PC-9 (cell line): ENCODE measurements at regions of chr20 and their contacts with region 1.

Region 1: DNA sequence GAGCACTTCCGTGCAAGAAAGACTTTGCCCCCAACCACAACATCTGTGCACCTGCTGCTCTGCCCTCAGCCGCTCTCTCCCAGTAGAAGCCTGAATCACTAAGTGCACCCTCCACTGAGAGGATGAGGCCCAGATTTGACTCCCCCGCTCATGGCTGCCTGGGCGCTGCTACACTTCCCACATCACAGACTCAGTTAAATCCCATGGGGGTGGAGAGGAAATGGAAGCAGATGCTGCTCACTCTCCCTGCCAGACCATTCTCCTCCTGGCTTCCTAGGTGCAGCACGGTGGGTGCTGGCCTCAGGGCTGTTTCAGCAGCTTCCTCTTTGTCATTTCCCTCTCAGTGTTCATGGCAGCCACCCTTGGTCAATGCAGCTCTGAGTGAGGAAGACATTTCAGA is 4.8 kb downstream of the CST5 start:
- DNase-seq: no peak
- H3K4me3 ChIP-seq: no peak overlapping the region
- H3K27ac ChIP-seq: no peak overlapping the region
- H3K4me1 ChIP-seq: peaks cover 29% of the 10 kb centered on the region
- H3K27me3 ChIP-seq: no peaks in the 10 kb centered on the region
- CTCF ChIP-seq: no peak

Region 2: GRCh38 chr20:23622839-23623343 is 251.9 kb before region 1 on chr20:
- CTCF ChIA-PET with region 1: no interaction called
- POLR2A ChIA-PET with region 1: interaction called, 10 read pairs
- intact Hi-C with region 1: no loop called
- DNase-seq: peak; percentile 74 to 81
- H3K4me3 ChIP-seq: peak overlapping the region; percentile 42; the same call in 1 of the 2 replicates
- H3K27ac ChIP-seq: peak overlapping the region; percentile 90
- H3K4me1 ChIP-seq: peaks cover 23% of the 10 kb centered on the region
- H3K27me3 ChIP-seq: no peaks in the 10 kb centered on the region
- CTCF ChIP-seq: no peak

Region 3: DNA sequence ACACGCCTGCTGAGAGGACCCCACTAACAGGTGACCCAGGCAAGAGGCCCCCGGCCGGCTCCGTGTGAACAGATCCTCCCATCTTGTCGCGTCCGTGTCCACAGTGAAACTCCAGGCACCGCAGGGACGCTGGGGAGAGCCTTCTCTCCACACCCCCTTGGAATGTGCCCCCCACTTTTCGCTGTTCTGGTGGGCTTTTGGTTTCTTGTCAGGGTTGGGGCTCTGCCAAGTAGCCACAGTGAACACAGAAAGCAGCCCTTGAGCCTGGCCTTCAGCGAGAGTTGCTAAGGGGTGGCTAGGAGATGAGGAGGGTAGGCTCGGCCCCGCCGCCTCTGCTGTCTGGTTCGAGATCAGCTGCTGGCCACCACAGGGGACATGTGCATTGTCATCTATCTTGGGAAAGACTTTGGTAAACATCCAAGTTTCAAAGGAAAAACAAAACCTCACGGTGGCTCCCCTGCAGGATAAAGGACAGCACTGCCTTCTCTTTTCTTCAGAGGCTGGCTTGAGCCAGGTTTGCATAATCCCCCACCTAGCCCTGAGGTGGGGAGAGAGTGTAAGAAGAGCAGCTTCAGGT is 617.4 kb after region 1 on chr20:
- CTCF ChIA-PET with region 1: no interaction called
- POLR2A ChIA-PET with region 1: no interaction called
- intact Hi-C with region 1: no loop called
- DNase-seq: no peak
- H3K4me3 ChIP-seq: no peak overlapping the region
- H3K27ac ChIP-seq: no peak overlapping the region
- H3K4me1 ChIP-seq: no peaks in the 10 kb centered on the region
- H3K27me3 ChIP-seq: no peaks in the 10 kb centered on the region
- CTCF ChIP-seq: no peak